ENCODE measurements at regions of chr2 and their contacts with region 1.

Region 1: DNA sequence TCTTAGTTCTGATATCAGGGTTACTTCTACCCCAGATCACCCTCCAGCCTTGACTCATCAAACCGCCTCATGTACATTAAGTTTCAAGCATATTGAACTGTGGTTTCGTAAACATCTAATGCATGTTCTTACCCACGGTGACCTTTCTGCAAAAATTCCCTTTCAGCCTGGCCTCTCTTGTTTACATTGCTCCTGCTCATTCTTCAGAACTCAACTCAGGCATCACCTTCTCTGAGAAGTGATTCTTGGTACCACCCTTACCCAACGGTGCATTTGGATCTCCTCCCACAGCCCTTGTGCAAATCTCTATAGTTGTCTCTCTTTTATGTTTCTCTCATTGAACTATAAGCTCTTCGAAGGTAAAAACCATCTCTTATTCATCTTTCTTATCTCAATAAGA is 503.1 kb upstream of the PKDCC start:
- DNase-seq: no peak
- ATAC-seq: no peak

Region 2: DNA sequence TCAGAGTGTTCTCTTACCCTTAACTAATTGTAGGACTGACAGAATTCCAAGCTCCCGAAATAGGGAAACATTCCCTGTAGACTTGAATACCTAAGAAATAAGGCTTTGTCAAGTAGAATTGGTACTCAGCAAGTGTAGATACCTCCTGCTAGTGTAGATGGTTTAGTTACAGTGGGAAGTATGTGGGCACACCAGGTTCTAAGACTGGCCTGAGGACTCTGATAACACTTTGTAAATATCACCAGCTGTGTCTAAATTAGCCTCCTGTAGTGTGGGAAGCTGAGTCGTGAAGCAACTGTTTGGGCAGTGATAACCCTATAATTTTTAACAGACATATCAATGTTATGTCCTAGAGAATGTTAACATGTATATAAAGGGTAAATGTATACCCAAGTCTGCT is 1397.3 kb before region 1 on chr2:
- intact Hi-C with region 1: loop called (anchors 5 kb)
- DNase-seq: no peak
- ATAC-seq: no peak

Region 3: DNA sequence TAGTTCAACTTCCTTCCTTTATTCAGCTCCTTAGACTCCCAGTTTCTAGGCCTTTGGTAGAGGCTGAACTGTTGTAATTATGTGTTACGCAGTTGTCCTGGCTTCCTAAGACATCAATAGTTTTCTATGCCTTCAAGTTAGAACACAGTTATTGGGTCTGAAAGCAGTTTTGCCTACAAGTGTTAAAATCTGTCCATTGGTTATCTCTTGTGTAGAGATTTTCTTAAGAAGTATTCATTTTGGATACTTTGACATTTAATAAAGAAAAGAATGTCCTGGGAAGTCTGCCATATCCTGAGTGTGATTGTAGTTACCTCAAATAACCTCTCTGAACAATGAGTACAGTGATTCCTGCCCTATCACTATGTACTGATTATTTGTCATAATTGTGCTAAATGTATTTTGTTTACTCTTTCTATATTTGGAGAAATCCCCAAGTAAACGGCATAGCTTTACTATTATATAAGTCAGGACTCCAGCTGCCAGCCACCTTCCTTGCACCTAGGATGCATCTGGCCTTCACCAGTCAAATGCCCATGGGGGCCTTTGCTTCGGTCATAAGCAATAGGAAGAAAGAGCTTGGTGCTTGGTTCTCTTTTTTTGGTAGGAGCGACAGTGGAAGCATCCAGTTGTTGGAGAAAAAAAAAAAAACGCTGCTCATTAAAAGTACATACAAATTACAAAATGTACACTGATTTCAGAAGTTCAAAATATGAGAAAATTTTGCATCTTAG is 53.6 kb after region 1 on chr2:
- intact Hi-C with region 1: no loop called
- DNase-seq: no peak
- ATAC-seq: peak; percentile 95